Psoas muscle (tissue), 8 donors: ENCODE measurements at regions of chr1 and their contacts with region 1.

Region 1: DNA sequence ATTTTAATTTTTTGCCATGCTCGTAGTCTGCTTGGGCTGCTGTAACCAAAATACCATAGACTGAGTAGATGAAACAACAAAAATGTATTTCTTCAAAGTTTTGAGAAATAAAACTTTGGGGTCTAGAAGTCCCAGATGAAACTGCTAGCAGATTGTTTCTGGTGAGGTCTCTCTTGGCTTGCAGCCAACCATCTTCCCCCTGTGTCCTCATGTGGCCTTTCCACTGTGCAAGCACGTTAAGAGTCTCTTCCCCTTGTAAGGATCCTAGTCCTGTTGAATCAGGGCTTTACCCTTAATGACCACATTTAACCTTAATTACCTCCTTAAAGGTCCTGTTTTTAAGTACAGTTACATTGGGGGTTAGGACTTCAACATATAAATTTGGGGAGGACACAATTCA is 86.6 kb downstream of the PTBP2 start:
- DNase-seq: no peak
- ATAC-seq: no peak
- H3K4me3 ChIP-seq: no peak overlapping the region
- H3K27ac ChIP-seq: no peak overlapping the region
- H3K4me1 ChIP-seq: no peaks in the 10 kb centered on the region
- H3K27me3 ChIP-seq: no peaks in the 10 kb centered on the region
- CTCF ChIP-seq: no peak

Region 2: DNA sequence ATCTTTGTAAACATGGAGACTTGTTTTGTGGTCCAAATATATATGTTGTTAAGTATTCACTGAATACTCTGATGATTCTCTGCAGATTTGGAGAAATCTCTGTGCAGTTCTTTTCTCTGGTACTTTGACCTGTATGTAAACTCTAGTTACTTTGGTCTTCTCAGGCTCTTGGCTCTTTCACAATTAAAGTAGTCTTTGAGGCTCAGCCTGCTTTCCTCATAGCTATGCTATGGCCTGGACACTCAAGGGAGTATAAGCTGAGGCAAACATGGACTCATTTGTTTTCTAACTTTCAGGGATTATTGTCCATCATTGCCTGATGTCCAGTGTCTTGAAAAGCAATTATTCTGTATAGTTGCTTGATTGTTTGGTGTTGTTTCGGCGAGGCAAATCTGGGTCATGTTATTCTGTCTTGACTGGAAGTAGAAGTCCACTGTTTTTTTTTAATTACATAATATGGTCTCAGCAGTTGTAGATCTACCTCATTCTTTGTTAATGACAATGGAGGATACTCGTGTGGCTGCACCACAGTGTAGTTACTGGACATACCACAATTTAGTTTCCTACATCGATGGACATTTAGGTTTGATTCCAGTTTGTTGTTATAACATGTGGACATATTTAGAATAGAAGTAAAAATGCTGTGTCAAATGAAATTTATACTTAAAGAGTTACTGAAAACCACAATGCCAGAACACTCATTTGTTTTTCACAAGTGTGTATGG is 77.5 kb before region 1 on chr1:
- intact Hi-C with region 1: no loop called
- DNase-seq: no peak
- ATAC-seq: peak in 1 of 4 donors; percentile 44
- H3K4me3 ChIP-seq: no peak overlapping the region
- H3K27ac ChIP-seq: no peak overlapping the region
- H3K4me1 ChIP-seq: peaks cover 37% of the 10 kb centered on the region
- H3K27me3 ChIP-seq: no peaks in the 10 kb centered on the region
- CTCF ChIP-seq: no peak

Region 3: DNA sequence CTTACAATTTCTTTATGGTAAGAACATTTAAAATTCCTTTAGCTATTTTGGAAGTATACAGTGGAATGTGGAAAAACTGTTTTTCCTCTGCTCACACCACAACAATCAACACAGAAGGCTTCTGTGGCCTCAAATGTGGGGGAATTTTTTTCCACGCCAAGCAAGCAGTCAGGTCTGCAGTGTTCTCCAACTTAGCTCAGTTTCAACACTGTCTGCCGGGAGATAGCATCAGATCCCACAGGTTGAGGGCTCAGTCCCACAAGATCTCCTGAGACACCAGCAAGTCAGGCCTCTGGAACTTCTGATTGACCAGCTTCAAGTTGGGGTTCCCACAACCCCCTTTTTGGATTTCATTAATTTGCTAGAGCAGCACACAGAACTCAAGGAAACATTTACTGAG is 36.3 kb before region 1 on chr1:
- intact Hi-C with region 1: loop called in 1 of 2 experiments (anchors 2 kb)
- DNase-seq: no peak
- ATAC-seq: no peak
- H3K4me3 ChIP-seq: no peak overlapping the region
- H3K27ac ChIP-seq: no peak overlapping the region
- H3K4me1 ChIP-seq: no peaks in the 10 kb centered on the region
- H3K27me3 ChIP-seq: no peaks in the 10 kb centered on the region
- CTCF ChIP-seq: no peak